ENCODE measurements at regions of chr15 and their contacts with region 1.

Region 1: GRCh38 chr15:89740137-89740536 is 10.9 kb downstream of the MESP1 start:
- DNase-seq: peak in 1 of 2 donors; percentile 61
- ATAC-seq: peak; percentile 73 to 89 (median 82)
- H3K4me3 ChIP-seq: no peak overlapping the region
- H3K27ac ChIP-seq: no peak overlapping the region
- H3K4me1 ChIP-seq: peaks cover 0 to 4% (median 0%) of the 10 kb centered on the region in 9 donors
- H3K27me3 ChIP-seq: peaks cover 0 to 19% (median 6%) of the 10 kb centered on the region in 7 donors
- CTCF ChIP-seq: peak; percentile 77 to 93 (median 88)

Region 2: DNA sequence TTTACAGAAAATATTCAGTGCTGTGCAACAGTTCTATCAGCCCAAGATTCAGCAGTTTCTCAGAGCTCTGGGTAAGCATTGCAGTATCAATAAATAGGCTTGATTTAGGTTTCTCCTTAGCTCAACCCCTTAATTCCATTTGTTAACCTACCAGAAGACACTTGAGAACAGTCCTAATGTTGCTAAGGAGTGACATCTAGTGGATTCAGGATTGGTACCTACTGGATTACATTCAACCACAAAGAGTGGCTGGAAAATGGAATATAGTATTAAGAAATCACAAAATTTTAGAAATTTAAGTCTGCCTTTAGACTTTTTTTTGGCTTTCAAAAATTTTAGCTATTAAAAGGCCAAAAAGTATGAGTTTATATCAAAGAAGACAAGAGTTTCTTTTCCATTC is 440.2 kb before region 1 on chr15:
- intact Hi-C with region 1: no loop called
- DNase-seq: no peak
- ATAC-seq: peak in 1 of 8 donors; percentile 53
- H3K4me3 ChIP-seq: no peak overlapping the region
- H3K27ac ChIP-seq: no peak overlapping the region
- H3K4me1 ChIP-seq: no peaks in the 10 kb centered on the region
- H3K27me3 ChIP-seq: no peaks in the 10 kb centered on the region
- CTCF ChIP-seq: peak in 6 of 9 donors; percentile 17 to 51 (median 41)

Region 3: DNA sequence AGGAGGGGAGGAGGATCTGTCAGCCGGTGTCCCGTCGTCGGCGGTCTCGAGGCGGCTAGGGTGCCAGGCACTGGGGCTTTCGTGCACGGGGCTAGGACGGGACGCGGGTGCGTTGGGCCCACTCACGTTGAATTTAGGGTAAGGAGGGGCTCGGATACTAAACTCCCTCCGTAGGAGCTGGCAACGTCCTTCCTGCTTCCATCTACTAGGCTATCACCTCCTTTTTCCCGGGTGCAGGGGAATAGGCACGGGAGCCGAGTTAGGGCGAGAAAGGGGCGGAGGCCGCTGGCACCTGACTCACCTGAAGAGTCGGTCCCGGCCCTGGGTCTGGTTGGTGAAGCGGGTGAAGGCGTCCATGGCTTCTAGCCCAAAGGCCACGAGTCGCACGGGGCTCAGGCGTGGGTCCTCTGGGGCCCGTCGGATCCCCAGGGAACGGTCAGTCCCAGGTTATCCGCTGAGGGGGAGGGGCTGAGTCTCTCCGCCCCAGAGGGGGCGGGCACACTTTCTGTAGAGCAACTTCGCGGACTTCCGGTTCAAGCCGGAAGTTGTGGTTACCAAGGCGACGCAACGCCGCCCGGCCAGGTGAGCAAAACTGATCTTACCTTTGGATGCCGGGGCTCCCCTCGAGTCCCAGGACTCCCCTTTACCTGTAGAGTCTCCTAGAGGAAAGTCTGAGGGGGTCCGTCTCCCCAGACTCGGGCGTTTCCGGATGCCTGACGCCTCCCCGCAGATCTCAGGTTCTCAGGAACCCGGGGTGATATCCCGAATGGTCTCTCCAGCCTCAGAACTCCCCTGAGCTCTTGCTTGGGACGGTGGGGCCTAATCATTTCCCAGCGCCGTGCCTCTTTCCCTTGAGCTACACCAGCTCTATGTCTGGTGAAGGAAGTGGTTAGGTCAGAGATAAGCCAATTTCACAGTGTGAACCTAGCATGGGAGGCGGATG is 49.6 kb before region 1 on chr15 and contains the starts of genes PEX11A and WDR93:
- intact Hi-C with region 1: loop called in 1 of 10 experiments (anchors 2 kb)
- DNase-seq: peak; percentile 77 to 79
- ATAC-seq: peak; percentile 85 to 98 (median 96)
- H3K4me3 ChIP-seq: peak within 1 kb of the TSS; percentile 59 to 86 (median 70)
- H3K27ac ChIP-seq: peak within 1 kb of the TSS in 8 of 10 donors; percentile 41 to 78 (median 62)
- H3K4me1 ChIP-seq: peaks cover 0 to 16% (median 10%) of the 10 kb centered on the region in 9 donors
- H3K27me3 ChIP-seq: no peaks in the 10 kb centered on the region
- CTCF ChIP-seq: no peak
- total RNA-seq, gene PEX11A: 6.0 to 14.3 (median 9.0) TPM
- total RNA-seq, gene WDR93: 0.15 TPM in 2 of 10 donors, not detected in the others

Region 4: GRCh38 chr15:89874926-89875564 is 134.9 kb after region 1 on chr15:
- intact Hi-C with region 1: loop called in 2 of 10 experiments (anchors 5 kb)
- DNase-seq: peak; percentile 75 to 84
- ATAC-seq: peak; percentile 82 to 94 (median 92)
- H3K4me3 ChIP-seq: no peak overlapping the region
- H3K27ac ChIP-seq: peak overlapping the region in 1 of 10 donors; percentile 72
- H3K4me1 ChIP-seq: peaks cover 0 to 34% (median 5%) of the 10 kb centered on the region in 9 donors
- H3K27me3 ChIP-seq: no peaks in the 10 kb centered on the region
- CTCF ChIP-seq: peak; percentile 82 to 98 (median 94)